ENCODE measurements at regions of chr5 and their contacts with region 1.

Region 1: DNA sequence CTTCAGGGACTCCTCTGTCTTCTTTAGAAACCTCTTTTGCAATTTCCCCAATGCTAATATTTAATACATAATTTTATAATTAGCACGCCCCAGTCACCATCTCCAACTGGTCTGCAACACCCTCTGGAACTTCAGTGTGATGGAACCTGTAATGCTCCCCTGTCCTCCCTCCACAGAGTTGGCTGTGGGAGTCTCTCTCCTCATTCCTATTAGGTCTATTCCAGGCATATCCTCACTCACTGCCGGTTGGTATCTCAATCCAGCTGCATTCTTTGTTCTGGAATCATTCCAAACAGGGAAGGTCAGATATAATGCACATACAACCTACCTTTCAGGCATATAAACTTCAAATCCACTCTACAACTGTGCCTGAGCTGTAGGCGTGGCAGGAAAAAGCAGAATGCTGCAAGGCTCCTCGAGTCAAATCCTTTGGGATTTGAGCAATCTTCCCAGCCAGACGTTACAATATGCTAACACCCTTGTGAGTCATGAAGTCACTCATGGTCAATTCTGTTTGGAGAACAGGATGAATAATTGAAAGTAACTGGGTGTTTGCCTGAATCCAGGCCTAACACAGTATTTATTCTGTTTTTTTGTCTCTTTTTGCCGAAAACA is 293.8 kb downstream of the CWC27 start:
- DNase-seq: peak; percentile 30 to 53
- ATAC-seq: peak; percentile 86 to 93
- H3K4me3 ChIP-seq: no peak overlapping the region
- H3K27ac ChIP-seq: peak overlapping the region; percentile 55 to 66 (median 64)
- H3K4me1 ChIP-seq: no peaks in the 10 kb centered on the region
- H3K27me3 ChIP-seq: no peaks in the 10 kb centered on the region
- CTCF ChIP-seq: no peak
- POLR2A ChIP-seq: no peak

Region 2: GRCh38 chr5:64603676-64604075 is 458.9 kb before region 1 on chr5:
- in situ Hi-C with region 1: no loop called
- intact Hi-C with region 1: no loop called
- DNase-seq: no peak
- ATAC-seq: no peak
- H3K4me3 ChIP-seq: no peak overlapping the region
- H3K27ac ChIP-seq: no peak overlapping the region
- H3K4me1 ChIP-seq: no peaks in the 10 kb centered on the region
- H3K27me3 ChIP-seq: no peaks in the 10 kb centered on the region
- CTCF ChIP-seq: no peak
- POLR2A ChIP-seq: no peak

Region 3: GRCh38 chr5:65035211-65036206 is 27.1 kb before region 1 on chr5:
- in situ Hi-C with region 1: no loop called
- intact Hi-C with region 1: loop called (anchors 1 kb)
- DNase-seq: peak; percentile 71 to 83
- ATAC-seq: peak; percentile 90 to 91
- H3K4me3 ChIP-seq: peak overlapping the region; percentile 71 to 84 (median 78)
- H3K27ac ChIP-seq: peak overlapping the region; percentile 78 to 87 (median 86)
- H3K4me1 ChIP-seq: peaks cover 6 to 10% of the 10 kb centered on the region in 2 donors
- H3K27me3 ChIP-seq: no peaks in the 10 kb centered on the region
- CTCF ChIP-seq: peak in 2 of 5 experiments; percentile 28 to 29
- POLR2A ChIP-seq: peak; percentile 27 to 40

Region 4: DNA sequence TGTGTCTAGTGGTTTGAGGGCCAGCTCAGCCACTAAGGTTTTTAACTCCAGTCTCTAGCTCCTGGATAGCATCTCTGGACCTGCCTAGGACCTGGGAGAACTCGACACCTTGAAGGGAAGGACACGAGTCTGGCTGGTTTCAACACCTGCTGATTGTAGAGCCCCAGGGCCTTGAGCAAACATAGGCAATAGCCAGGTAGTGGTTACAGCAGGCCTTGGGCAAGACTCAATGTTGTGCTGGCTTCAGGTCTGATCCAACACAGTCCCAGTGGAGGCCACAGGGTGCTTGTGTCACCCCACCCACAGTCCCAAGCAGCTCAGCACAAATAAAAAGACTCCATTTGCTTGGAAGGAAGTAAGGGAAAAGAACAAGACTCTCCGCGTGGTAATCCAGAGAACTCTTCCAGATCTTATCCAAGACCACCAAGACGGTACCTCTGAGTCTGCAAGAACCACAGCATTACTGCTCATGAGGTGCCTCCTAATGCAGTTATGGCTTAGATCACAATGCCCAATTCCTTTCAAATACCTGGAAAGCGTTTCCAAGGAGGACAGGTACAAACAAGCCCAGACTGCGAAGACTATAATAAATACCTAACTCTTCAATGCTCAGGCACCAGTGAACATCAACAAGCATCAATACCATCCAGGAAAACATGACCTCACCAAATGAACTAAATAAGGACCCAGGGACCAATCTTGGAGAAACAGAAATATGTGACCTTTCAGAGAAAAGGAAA is 31.5 kb after region 1 on chr5:
- in situ Hi-C with region 1: no loop called
- intact Hi-C with region 1: no loop called
- DNase-seq: no peak
- ATAC-seq: no peak
- H3K4me3 ChIP-seq: no peak overlapping the region
- H3K27ac ChIP-seq: no peak overlapping the region
- H3K4me1 ChIP-seq: no peaks in the 10 kb centered on the region
- H3K27me3 ChIP-seq: no peaks in the 10 kb centered on the region
- CTCF ChIP-seq: no peak
- POLR2A ChIP-seq: no peak

Region 5: GRCh38 chr5:65271906-65272305 is 209.3 kb after region 1 on chr5:
- in situ Hi-C with region 1: no loop called
- intact Hi-C with region 1: no loop called
- DNase-seq: no peak
- ATAC-seq: no peak
- H3K4me3 ChIP-seq: no peak overlapping the region
- H3K27ac ChIP-seq: no peak overlapping the region
- H3K4me1 ChIP-seq: no peaks in the 10 kb centered on the region
- H3K27me3 ChIP-seq: no peaks in the 10 kb centered on the region
- CTCF ChIP-seq: no peak
- POLR2A ChIP-seq: no peak